SK-N-SH (cell line): ENCODE measurements at regions of chr3 and their contacts with region 1.

Region 1: GRCh38 chr3:94004301-94004910 is 24.0 kb downstream of the STX19 start:
- DNase-seq: peak; percentile 44
- H3K4me3 ChIP-seq: peak overlapping the region; percentile 29 to 57; a peak in 2 of 4 replicates
- H3K27ac ChIP-seq: peak overlapping the region in 1 of 2 experiments; percentile 16; a peak in 3 of 4 replicates
- H3K4me1 ChIP-seq: peaks cover 0 to 4% of the 10 kb centered on the region in 2 experiments; a peak in 1 of 4 replicates
- H3K27me3 ChIP-seq: no peaks in the 10 kb centered on the region
- CTCF ChIP-seq: peak; percentile 89
- EP300 ChIP-seq: no peak
- RAD21 ChIP-seq: peak; percentile 83

Region 2: GRCh38 chr3:93994056-93994455 is 10.3 kb before region 1 on chr3:
- CTCF ChIA-PET with region 1: interaction called, 28 read pairs
- POLR2A ChIA-PET with region 1: no interaction called
- DNase-seq: no peak
- H3K4me3 ChIP-seq: no peak overlapping the region
- H3K27ac ChIP-seq: no peak overlapping the region
- H3K4me1 ChIP-seq: no peaks in the 10 kb centered on the region
- H3K27me3 ChIP-seq: no peaks in the 10 kb centered on the region
- CTCF ChIP-seq: no peak
- EP300 ChIP-seq: no peak
- RAD21 ChIP-seq: no peak

Region 3: GRCh38 chr3:94015025-94015424 is 10.6 kb after region 1 on chr3:
- CTCF ChIA-PET with region 1: interaction called, 17 read pairs
- POLR2A ChIA-PET with region 1: no interaction called
- DNase-seq: no peak
- H3K4me3 ChIP-seq: no peak overlapping the region
- H3K27ac ChIP-seq: no peak overlapping the region
- H3K4me1 ChIP-seq: no peaks in the 10 kb centered on the region; a peak in 1 of 4 replicates
- H3K27me3 ChIP-seq: no peaks in the 10 kb centered on the region
- CTCF ChIP-seq: no peak
- EP300 ChIP-seq: no peak
- RAD21 ChIP-seq: no peak

Region 4: DNA sequence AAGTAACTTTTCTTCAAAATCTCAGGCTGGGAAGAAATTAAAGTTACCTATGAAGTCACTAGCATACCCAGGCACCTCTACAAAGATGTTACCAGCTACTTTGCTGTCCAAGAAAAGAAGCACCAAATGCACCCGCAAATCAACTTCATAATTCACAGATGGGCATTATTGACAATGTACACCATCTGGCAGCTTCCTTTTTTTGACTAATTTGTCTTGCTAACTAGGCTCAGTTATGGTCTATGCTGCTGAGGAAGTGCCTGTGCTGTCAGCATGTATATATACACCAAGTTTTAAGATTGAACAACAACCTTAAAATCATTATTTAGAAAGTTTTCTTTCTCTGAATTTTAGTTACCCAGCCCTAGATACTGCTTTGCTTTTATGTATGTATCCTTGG is 152.2 kb after region 1 on chr3:
- CTCF ChIA-PET with region 1: no interaction called
- POLR2A ChIA-PET with region 1: no interaction called
- DNase-seq: no peak
- H3K4me3 ChIP-seq: no peak overlapping the region
- H3K27ac ChIP-seq: no peak overlapping the region
- H3K4me1 ChIP-seq: peaks cover 7% of the 10 kb centered on the region in 2 experiments; a peak in 3 of 4 replicates
- H3K27me3 ChIP-seq: no peaks in the 10 kb centered on the region
- CTCF ChIP-seq: no peak
- EP300 ChIP-seq: no peak
- RAD21 ChIP-seq: no peak

Region 5: DNA sequence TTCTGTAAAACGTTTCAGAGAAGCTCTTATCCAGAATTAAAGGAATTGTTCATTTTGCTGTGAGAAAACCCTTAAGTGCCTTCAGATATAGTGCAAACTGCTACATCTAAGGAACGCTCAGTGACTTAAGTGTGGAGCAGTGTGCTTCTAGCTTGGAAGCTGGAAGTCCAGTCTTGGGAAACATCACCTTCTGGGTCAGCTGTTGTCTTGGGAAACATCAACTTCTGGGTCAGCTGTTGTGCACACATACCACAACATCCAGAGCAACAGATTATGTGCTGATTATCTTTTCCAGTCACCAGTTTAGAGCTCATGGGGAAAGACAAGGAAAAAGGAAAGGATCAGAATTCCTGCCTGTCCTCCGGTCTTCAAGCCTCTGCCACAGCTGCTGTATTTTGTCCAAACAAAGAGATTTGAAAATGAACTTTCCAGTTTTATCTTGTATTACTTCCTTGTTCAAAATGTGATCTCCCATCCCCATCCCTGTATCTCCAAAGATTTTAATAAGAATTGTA is 772.1 kb after region 1 on chr3:
- CTCF ChIA-PET with region 1: no interaction called
- POLR2A ChIA-PET with region 1: no interaction called
- DNase-seq: no peak
- H3K4me3 ChIP-seq: no peak overlapping the region
- H3K27ac ChIP-seq: no peak overlapping the region
- H3K4me1 ChIP-seq: no peaks in the 10 kb centered on the region
- H3K27me3 ChIP-seq: no peaks in the 10 kb centered on the region
- CTCF ChIP-seq: no peak
- EP300 ChIP-seq: no peak
- RAD21 ChIP-seq: no peak